ENCODE measurements at regions of chr7 and their contacts with region 1.

Region 1: GRCh38 chr7:100015232-100016209 is at the start of gene ZKSCAN1:
- DNase-seq: peak; percentile 55 to 93
- H3K4me3 ChIP-seq: peak within 1 kb of the TSS; percentile 94 to 96
- H3K27ac ChIP-seq: peak within 1 kb of the TSS; percentile 97 to 98
- H3K4me1 ChIP-seq: peaks cover 0 to 16% of the 10 kb centered on the region in 2 donors
- H3K27me3 ChIP-seq: no peaks in the 10 kb centered on the region
- CTCF ChIP-seq: no peak
- total RNA-seq, gene ZKSCAN1: 19.9 TPM

Region 2: DNA sequence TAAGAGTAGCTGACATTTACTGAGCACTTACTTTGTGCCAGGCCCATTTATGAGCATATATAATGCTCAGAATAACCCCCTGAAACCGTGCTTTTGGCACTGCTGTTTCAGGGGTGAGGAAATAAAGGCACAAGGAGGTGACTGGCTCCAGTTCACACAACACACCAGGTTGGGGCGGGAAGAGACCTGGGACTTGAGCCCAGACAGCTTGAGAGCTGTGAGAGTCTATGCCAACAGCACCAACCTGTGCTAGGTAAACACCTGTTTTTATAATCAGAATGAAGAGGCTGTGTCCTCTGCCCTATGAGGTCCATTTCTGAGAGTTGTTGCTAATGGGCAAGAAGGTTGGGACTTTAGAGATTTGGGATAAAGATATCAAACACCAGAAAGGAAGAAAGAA is 30.9 kb before region 1 on chr7:
- intact Hi-C with region 1: no loop called
- DNase-seq: no peak
- H3K4me3 ChIP-seq: no peak overlapping the region
- H3K27ac ChIP-seq: no peak overlapping the region
- H3K4me1 ChIP-seq: no peaks in the 10 kb centered on the region
- H3K27me3 ChIP-seq: no peaks in the 10 kb centered on the region
- CTCF ChIP-seq: no peak

Region 3: DNA sequence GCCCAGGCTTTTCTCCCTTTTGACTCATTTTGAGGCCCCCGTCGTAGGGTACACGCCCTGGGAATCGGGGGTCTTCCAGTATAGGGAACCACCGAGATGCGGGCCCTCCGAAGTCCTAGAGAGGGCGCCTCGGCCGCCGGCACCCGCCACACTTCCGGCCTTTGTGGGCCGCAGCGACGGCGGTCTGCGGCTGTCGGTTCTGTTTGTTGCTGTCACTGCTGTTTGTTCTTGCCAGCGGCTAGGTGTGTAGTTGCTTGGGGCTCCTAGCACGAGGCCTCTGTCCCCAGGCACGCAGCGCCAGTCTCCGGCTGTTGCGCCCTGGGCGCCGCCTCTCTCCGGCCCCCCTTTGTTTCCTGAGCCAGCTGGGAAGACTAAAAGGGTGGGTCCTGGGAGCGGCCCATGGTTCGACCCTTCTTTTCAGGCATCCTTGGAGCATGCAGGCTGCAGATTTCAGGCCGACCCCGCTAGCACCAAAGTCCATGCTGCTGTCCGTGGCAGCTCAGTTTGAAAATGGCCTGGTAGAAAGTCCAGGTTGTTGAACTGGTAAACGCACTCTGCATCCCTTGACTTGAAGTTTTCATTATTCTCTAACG is 17.9 kb before region 1 on chr7:
- intact Hi-C with region 1: no loop called
- DNase-seq: no peak
- H3K4me3 ChIP-seq: peak overlapping the region; percentile 58 to 67
- H3K27ac ChIP-seq: peak overlapping the region; percentile 47 to 61
- H3K4me1 ChIP-seq: peaks cover 0 to 8% of the 10 kb centered on the region in 2 donors
- H3K27me3 ChIP-seq: no peaks in the 10 kb centered on the region
- CTCF ChIP-seq: peak in 2 of 3 experiments; percentile 34 to 37

Region 4: GRCh38 chr7:100049441-100050311 is 34.2 kb after region 1 on chr7 and contains the start of gene ZSCAN21:
- intact Hi-C with region 1: loop called (anchors 1 kb)
- DNase-seq: peak; percentile 57 to 93
- H3K4me3 ChIP-seq: peak within 1 kb of the TSS; percentile 65 to 88
- H3K27ac ChIP-seq: peak within 1 kb of the TSS; percentile 87 to 97
- H3K4me1 ChIP-seq: peaks cover 5 to 9% of the 10 kb centered on the region in 2 donors
- H3K27me3 ChIP-seq: no peaks in the 10 kb centered on the region
- CTCF ChIP-seq: peak in 2 of 3 experiments; percentile 23 to 29
- total RNA-seq, gene ZSCAN21: 58.5 TPM